H1 (cell line): ENCODE measurements at regions of chr20 and their contacts with region 1.

Region 1: DNA sequence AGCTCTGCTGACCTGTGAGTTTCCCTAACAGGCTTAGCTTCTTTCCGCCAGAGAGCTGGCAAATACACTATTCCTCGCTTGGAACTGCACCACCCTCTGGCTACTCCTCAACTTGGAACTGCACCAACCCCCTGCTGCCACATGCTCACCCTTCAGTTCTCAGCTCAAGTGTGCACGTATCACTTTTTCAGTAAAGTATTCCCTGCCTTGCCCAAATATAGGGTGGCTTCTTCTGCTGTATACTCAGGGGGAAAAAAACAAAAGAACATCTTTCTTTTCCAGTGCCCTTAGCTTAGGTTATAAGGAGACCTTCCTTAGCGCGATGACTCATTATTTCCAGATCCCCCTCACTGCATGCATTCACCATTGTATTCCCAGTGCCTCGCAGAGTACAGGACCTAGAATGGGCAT is 21.2 kb downstream of the GNAS-AS1 start:
- DNase-seq: no peak
- H3K4me3 ChIP-seq: no peak overlapping the region
- H3K27ac ChIP-seq: no peak overlapping the region
- H3K4me1 ChIP-seq: no peaks in the 10 kb centered on the region
- H3K27me3 ChIP-seq: no peaks in the 10 kb centered on the region
- CTCF ChIP-seq: no peak
- EP300 ChIP-seq: no peak
- POLR2A ChIP-seq: no peak
- RAD21 ChIP-seq: no peak

Region 2: GRCh38 chr20:58818585-58819285 is 10.8 kb before region 1 on chr20:
- CTCF ChIA-PET with region 1: interaction called, 7 read pairs
- POLR2A ChIA-PET with region 1: interaction called, 64 read pairs
- DNase-seq: no peak
- H3K4me3 ChIP-seq: no peak overlapping the region
- H3K27ac ChIP-seq: no peak overlapping the region
- H3K4me1 ChIP-seq: 0 out of 7 replicates have a peak, but pooled peaks cover 0 to 2% (median 0%) of the 10 kb centered on the region in 4 experiments
- H3K27me3 ChIP-seq: no peaks in the 10 kb centered on the region
- CTCF ChIP-seq: no peak
- EP300 ChIP-seq: no peak
- POLR2A ChIP-seq: no peak
- RAD21 ChIP-seq: no peak

Region 3: DNA sequence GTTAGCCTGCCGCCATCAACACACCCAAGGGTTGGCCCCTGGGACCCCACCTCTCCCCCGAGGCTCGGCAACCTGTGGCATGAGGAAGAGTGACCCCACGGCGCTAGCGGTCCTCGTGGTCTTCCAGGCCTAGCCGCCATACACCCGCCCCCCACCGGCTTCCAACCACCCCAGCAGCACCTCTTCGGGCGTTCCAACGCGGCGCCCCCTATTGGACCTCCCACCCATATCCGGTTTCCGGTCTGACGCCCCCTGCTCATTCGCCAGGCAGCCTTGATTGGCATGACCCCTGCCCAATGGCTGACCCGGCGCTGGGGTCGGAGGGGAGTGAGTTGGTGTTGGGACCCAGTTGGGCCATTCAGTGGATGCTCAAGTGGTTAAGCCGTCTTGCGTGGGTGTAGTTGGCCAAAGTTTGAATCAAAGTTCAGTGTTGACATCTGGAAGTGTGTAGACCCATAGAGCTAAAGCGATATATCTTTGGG is 21.2 kb after region 1 on chr20 and contains the start of gene GNAS-AS1:
- CTCF ChIA-PET with region 1: interaction called, 57 read pairs
- POLR2A ChIA-PET with region 1: interaction called, 163 read pairs
- DNase-seq: peak; percentile 76 to 96
- H3K4me3 ChIP-seq: peak within 1 kb of the TSS; percentile 68 to 88 (median 78)
- H3K27ac ChIP-seq: peak within 1 kb of the TSS; percentile 87
- H3K4me1 ChIP-seq: peaks cover 0 to 32% (median 15%) of the 10 kb centered on the region in 4 experiments; a peak in 6 of 7 replicates
- H3K27me3 ChIP-seq: peaks cover 16 to 47% (median 41%) of the 10 kb centered on the region in 4 experiments
- CTCF ChIP-seq: peak in 2 of 3 experiments; percentile 9 to 11; a peak in 2 of 4 replicates
- EP300 ChIP-seq: no peak
- POLR2A ChIP-seq: no peak; a peak in 1 of 3 replicates
- RAD21 ChIP-seq: no peak
- total RNA-seq, gene GNAS-AS1: 11.7 and 13.7 TPM in 2 replicates